ENCODE measurements at regions of chr1 and their contacts with region 1.

Region 1: DNA sequence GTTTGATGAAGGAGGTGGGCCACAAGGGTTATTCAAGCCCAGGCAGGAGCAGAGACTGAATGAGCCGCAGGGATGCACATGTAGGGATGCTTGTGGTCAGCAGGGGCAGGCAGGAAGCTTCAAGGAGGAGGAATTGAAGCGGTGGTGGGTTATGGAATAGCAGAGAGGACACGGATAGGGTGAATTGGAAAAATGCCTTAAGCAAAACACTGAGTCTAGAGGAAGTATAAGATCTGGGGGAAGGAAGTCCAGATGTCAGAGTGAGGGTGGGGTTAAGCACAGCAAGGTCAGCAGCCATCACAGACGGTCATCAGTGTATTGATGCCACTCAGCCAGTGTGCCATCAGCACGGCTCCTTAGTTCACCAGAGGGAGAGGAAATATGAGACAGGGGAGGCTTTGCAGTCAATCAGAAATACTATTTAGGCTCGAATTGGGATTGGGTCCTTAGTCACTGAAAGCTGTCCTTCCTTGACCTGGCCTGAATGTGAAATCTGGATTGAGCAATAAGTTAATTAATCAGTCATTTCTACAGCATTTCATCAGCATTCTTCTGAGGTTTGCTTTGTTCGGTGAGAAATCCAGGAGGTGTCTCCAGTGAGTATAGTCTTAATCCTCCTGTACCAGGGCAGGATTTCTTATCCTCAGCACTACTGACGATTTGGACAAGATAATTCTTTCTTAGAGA is 6.0 kb upstream of the LCE1F start:
- DNase-seq: peak; percentile 63
- H3K4me3 Mint-ChIP-seq: no peak overlapping the region
- H3K27ac Mint-ChIP-seq: peak overlapping the region; percentile 5
- H3K4me1 Mint-ChIP-seq: peaks cover 29% of the 10 kb centered on the region
- H3K27me3 Mint-ChIP-seq: no peaks in the 10 kb centered on the region
- CTCF ChIP-seq: peak; percentile 13

Region 2: DNA sequence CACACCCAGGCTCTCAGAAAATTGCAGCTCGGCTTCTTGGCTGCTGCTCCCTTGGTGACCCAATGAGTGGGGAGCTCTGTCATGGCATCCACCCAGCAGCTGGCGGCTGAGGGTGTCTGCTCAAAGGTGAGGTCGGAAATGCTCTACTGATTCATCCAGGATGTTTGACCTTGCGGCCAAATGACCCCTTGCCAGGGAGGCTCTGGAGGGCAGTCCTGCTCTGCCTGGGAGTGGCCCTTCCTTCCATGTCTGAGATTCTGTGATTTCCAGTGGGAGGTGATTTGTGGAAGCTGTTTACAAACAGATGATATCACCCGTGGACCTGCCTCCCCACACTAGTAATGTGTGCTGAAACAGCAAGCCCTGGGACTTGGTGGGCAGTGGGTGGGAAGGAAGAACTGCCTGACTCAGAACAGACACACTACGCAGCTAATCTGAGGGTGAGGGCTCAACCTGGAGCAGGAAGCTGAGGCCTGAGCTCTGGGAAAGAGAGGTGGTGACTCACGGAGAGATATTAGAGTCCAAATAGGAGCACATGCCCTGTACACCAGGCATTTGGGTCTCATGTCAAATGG is 251.7 kb before region 1 on chr1:
- CTCF ChIA-PET with region 1: no interaction called
- POLR2A ChIA-PET with region 1: no interaction called
- intact Hi-C with region 1: no loop called
- DNase-seq: peak; percentile 85
- H3K4me3 Mint-ChIP-seq: no peak overlapping the region
- H3K27ac Mint-ChIP-seq: peak overlapping the region; percentile 84
- H3K4me1 Mint-ChIP-seq: peaks cover 15% of the 10 kb centered on the region
- H3K27me3 Mint-ChIP-seq: no peaks in the 10 kb centered on the region
- CTCF ChIP-seq: no peak

Region 3: GRCh38 chr1:152745289-152745704 is 23.7 kb before region 1 on chr1:
- CTCF ChIA-PET with region 1: no interaction called
- POLR2A ChIA-PET with region 1: interaction called, 3 read pairs
- intact Hi-C with region 1: loop called (anchors 1 kb)
- DNase-seq: peak; percentile 89
- H3K4me3 Mint-ChIP-seq: no peak overlapping the region
- H3K27ac Mint-ChIP-seq: peak overlapping the region; percentile 71
- H3K4me1 Mint-ChIP-seq: peaks cover 34% of the 10 kb centered on the region
- H3K27me3 Mint-ChIP-seq: no peaks in the 10 kb centered on the region
- CTCF ChIP-seq: no peak

Region 4: DNA sequence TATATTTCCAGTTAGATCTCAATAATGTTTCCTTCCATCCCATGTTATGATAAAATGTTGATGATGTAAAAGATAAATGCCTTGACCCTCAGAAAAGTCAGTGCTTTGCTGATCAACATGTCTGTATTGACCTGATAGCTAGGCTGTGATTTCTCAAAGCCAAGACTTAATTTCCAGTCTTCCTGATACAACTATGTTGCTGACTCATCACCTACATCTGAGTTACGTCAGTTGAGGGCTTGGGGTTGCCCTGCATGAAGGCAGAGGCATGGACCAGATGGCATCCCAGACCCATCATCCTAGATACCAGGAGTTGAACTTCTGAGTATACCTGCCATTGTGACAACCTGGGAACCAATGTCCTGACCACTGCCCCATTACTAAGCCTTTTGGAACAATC is 32.3 kb after region 1 on chr1:
- CTCF ChIA-PET with region 1: no interaction called
- POLR2A ChIA-PET with region 1: interaction called, 3 read pairs
- intact Hi-C with region 1: loop called (anchors 1 kb)
- DNase-seq: peak; percentile 3
- H3K4me3 Mint-ChIP-seq: no peak overlapping the region
- H3K27ac Mint-ChIP-seq: no peak overlapping the region
- H3K4me1 Mint-ChIP-seq: peaks cover 8% of the 10 kb centered on the region
- H3K27me3 Mint-ChIP-seq: no peaks in the 10 kb centered on the region
- CTCF ChIP-seq: no peak

Region 5: DNA sequence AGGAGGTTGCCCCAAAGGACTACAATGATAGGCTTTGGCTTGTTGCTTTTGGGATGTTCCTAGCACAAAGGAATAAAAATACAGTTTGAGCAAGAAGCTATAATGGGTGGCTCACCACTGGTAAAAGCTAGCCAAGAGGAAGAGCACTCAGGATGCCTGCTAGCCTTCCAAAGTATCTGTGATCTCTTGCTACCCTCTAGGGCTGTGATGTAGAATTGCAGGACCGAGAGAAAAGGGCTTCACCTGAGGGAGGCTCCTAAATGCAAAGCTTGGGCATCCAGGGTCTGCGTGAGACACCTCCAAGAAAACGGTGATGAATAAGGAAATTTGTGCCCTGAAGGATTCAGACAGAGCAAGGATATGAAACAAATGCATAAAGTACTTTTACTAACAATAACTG is 157.1 kb after region 1 on chr1:
- CTCF ChIA-PET with region 1: interaction called, 5 read pairs
- POLR2A ChIA-PET with region 1: no interaction called
- intact Hi-C with region 1: loop called (anchors 5 kb)
- DNase-seq: peak; percentile 82
- H3K4me3 Mint-ChIP-seq: no peak overlapping the region
- H3K27ac Mint-ChIP-seq: no peak overlapping the region
- H3K4me1 Mint-ChIP-seq: peaks cover 11% of the 10 kb centered on the region
- H3K27me3 Mint-ChIP-seq: no peaks in the 10 kb centered on the region
- CTCF ChIP-seq: peak; percentile 98

Measured in MCF 10A (cell line).